GM12878 (cell line): ENCODE measurements at regions of chrX and their contacts with region 1.

Region 1: GRCh38 chrX:88655460-88655859 is 91.6 kb upstream of the CPXCR1 start:
- DNase-seq: no peak
- ATAC-seq: no peak
- H3K4me3 ChIP-seq: no peak overlapping the region
- H3K27ac ChIP-seq: no peak overlapping the region
- H3K4me1 ChIP-seq: no peaks in the 10 kb centered on the region
- H3K27me3 ChIP-seq: no peaks in the 10 kb centered on the region
- CTCF ChIP-seq: no peak
- EP300 ChIP-seq: no peak
- POLR2A ChIP-seq: no peak
- RAD21 ChIP-seq: no peak

Region 2: DNA sequence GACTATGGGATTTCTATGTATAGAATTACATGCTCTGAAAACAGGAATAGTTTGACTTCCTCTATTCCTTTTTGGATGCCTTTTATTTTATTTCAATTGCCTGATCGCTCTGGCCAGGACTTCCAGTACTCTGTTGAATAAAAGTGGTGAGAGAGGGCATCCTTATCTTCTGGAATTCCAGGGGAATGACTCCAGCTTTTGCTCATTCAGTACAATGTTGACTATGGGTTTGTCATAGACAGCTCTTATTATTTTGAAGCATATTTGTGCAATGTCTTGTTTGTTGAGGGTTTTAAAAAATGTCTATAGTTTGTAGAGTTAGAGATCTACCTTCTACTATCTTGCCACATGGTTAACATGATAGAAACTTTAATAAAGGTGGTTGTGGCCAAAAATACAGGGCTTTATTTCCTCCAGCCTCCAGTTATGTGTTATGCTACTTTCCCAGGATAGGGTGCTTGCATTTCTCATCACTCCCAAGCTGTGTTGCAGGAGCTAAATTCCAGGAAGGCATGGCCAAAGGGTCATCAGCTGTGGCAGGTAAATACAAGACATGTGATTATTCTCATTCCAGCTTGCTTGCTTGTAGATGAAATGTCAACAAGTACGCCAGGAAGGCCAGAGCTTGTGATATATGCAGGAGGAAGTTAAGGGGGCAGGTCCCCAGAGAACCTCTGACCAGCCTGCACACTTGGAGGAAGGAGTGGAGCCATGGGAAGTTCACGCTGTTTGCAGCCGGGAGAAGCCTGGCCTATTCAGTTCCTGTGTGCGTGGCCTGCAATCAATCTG is 50.8 kb before region 1 on chrX:
- CTCF ChIA-PET with region 1: no interaction called
- POLR2A ChIA-PET with region 1: no interaction called
- RAD21 ChIA-PET with region 1: no interaction called
- SMC1A ChIA-PET with region 1: no interaction called
- in situ Hi-C with region 1: no loop called
- intact Hi-C with region 1: loop called (anchors 10 kb)
- DNase-seq: no peak
- ATAC-seq: no peak
- H3K4me3 ChIP-seq: no peak overlapping the region
- H3K27ac ChIP-seq: no peak overlapping the region
- H3K4me1 ChIP-seq: no peaks in the 10 kb centered on the region
- H3K27me3 ChIP-seq: no peaks in the 10 kb centered on the region
- CTCF ChIP-seq: no peak
- EP300 ChIP-seq: no peak
- POLR2A ChIP-seq: no peak
- RAD21 ChIP-seq: no peak

Region 3: GRCh38 chrX:88672261-88672660 is 16.8 kb after region 1 on chrX:
- CTCF ChIA-PET with region 1: no interaction called
- POLR2A ChIA-PET with region 1: no interaction called
- RAD21 ChIA-PET with region 1: no interaction called
- SMC1A ChIA-PET with region 1: no interaction called
- in situ Hi-C with region 1: no loop called
- intact Hi-C with region 1: no loop called
- DNase-seq: no peak
- ATAC-seq: no peak
- H3K4me3 ChIP-seq: no peak overlapping the region
- H3K27ac ChIP-seq: no peak overlapping the region
- H3K4me1 ChIP-seq: no peaks in the 10 kb centered on the region
- H3K27me3 ChIP-seq: no peaks in the 10 kb centered on the region
- CTCF ChIP-seq: no peak
- EP300 ChIP-seq: no peak
- POLR2A ChIP-seq: no peak
- RAD21 ChIP-seq: no peak

Region 4: DNA sequence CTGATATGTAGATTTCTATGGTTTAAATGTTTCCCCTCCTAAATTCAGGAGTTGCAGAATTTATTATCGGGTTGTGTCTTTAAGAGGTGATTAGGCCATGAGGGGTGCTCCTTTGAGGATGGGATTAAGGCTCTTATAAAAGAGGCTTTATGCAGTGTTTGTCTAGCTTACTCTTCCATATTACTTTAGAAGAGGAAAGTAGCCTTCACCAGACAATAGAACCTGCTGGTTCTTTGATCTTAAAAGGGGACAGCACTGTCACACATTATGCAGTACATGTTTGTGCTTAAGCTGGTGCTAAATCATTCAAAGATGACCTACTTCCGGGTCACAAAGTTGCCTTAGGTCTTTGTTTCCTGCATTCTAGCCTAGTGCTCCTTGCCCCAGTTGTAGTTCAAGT is 172.6 kb after region 1 on chrX:
- CTCF ChIA-PET with region 1: no interaction called
- POLR2A ChIA-PET with region 1: no interaction called
- RAD21 ChIA-PET with region 1: no interaction called
- SMC1A ChIA-PET with region 1: no interaction called
- in situ Hi-C with region 1: no loop called
- intact Hi-C with region 1: no loop called
- DNase-seq: no peak
- ATAC-seq: no peak
- H3K4me3 ChIP-seq: no peak overlapping the region
- H3K27ac ChIP-seq: no peak overlapping the region
- H3K4me1 ChIP-seq: no peaks in the 10 kb centered on the region
- H3K27me3 ChIP-seq: no peaks in the 10 kb centered on the region
- CTCF ChIP-seq: no peak
- EP300 ChIP-seq: no peak
- POLR2A ChIP-seq: no peak
- RAD21 ChIP-seq: no peak